H1 (cell line): ENCODE measurements at regions of chr3 and their contacts with region 1.

Region 1: DNA sequence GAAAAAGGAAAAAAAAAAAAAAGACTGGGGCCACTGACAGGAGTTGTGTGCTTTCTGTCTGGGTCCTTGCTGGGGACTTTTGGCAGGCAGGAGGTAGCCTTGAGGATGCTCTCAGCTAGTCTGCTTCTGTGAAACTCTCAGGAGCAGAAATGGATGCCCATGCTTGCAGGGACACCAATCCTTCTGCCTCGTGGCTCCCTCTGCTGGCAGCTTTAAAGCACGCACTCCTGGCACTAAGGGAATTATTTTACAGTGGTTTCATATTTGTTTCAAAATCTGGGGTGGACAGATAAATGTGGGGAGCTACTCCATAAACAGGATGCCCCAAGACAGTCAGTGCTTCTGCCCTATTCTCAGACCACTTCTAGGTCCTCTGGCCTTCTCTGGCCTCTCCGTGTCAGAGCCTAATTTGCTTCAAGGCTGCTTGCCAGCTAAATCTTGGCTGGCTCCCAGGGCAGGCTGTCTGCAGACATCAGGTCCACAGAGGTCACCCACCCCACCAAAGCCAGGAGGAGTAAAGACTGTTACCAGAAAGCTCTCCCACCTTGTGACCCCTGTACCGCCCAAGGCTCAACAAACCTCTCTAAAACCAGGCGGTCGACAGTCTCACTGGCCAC is 17.1 kb downstream of the TRAIP start:
- DNase-seq: peak; percentile 15 to 78
- H3K4me3 ChIP-seq: no peak overlapping the region
- H3K27ac ChIP-seq: 0 out of 2 replicates have a peak overlapping the region, but pooled peaks have one; percentile 3
- H3K4me1 ChIP-seq: peaks cover 0 to 6% (median 0%) of the 10 kb centered on the region in 4 experiments; a peak in 2 of 7 replicates
- H3K27me3 ChIP-seq: no peaks in the 10 kb centered on the region
- CTCF ChIP-seq: peak; percentile 82 to 91 (median 86)
- EP300 ChIP-seq: no peak
- POLR2A ChIP-seq: no peak
- RAD21 ChIP-seq: peak; percentile 85 to 86

Region 2: GRCh38 chr3:49786241-49786958 is 52.9 kb before region 1 on chr3 and contains the start of gene IP6K1:
- CTCF ChIA-PET with region 1: interaction called, 20 read pairs
- POLR2A ChIA-PET with region 1: interaction called, 3 read pairs
- DNase-seq: peak; percentile 99
- H3K4me3 ChIP-seq: peak within 1 kb of the TSS; percentile 75 to 95 (median 86)
- H3K27ac ChIP-seq: peak within 1 kb of the TSS; percentile 74
- H3K4me1 ChIP-seq: peaks cover 0 to 5% (median 2%) of the 10 kb centered on the region in 4 experiments; a peak in 2 of 7 replicates
- H3K27me3 ChIP-seq: peaks cover 0 to 2% (median 0%) of the 10 kb centered on the region in 4 experiments; a peak in 2 of 7 replicates
- CTCF ChIP-seq: no peak
- EP300 ChIP-seq: no peak
- POLR2A ChIP-seq: peak in 1 of 2 experiments; percentile 67; a peak in 2 of 3 replicates
- RAD21 ChIP-seq: no peak
- total RNA-seq, gene IP6K1: 35.2 and 36.3 TPM in 2 replicates

Region 3: GRCh38 chr3:49813497-49814174 is 25.7 kb before region 1 on chr3 and contains the start of gene UBA7:
- CTCF ChIA-PET with region 1: interaction called, 266 read pairs
- POLR2A ChIA-PET with region 1: interaction called, 8 read pairs
- DNase-seq: no peak
- H3K4me3 ChIP-seq: no peak within 1 kb of the TSS
- H3K27ac ChIP-seq: no peak within 1 kb of the TSS
- H3K4me1 ChIP-seq: no peaks in the 10 kb centered on the region
- H3K27me3 ChIP-seq: peaks cover 0 to 3% (median 0%) of the 10 kb centered on the region in 4 experiments; a peak in 1 of 7 replicates
- CTCF ChIP-seq: no peak
- EP300 ChIP-seq: no peak
- POLR2A ChIP-seq: no peak
- RAD21 ChIP-seq: no peak
- total RNA-seq, gene UBA7: 0.34 and 1.9 TPM in 2 replicates

Region 4: GRCh38 chr3:49867871-49868321 is 28.6 kb after region 1 on chr3:
- CTCF ChIA-PET with region 1: interaction called, 83 read pairs
- POLR2A ChIA-PET with region 1: interaction called, 4 read pairs
- DNase-seq: peak in 1 of 2 experiments; percentile 86
- H3K4me3 ChIP-seq: peak overlapping the region in 1 of 4 experiments; percentile 66; a peak in 3 of 8 replicates
- H3K27ac ChIP-seq: no peak overlapping the region
- H3K4me1 ChIP-seq: peaks cover 11 to 47% (median 32%) of the 10 kb centered on the region in 4 experiments
- H3K27me3 ChIP-seq: peaks cover 0 to 5% (median 3%) of the 10 kb centered on the region in 4 experiments; a peak in 2 of 7 replicates
- CTCF ChIP-seq: no peak
- EP300 ChIP-seq: no peak
- POLR2A ChIP-seq: no peak
- RAD21 ChIP-seq: peak in 1 of 2 experiments; percentile 11; a peak in 1 of 4 replicates

Region 5: GRCh38 chr3:49889296-49889926 is 50.1 kb after region 1 on chr3:
- CTCF ChIA-PET with region 1: interaction called, 20 read pairs
- POLR2A ChIA-PET with region 1: no interaction called
- DNase-seq: no peak
- H3K4me3 ChIP-seq: no peak overlapping the region
- H3K27ac ChIP-seq: no peak overlapping the region
- H3K4me1 ChIP-seq: peaks cover 0 to 2% (median 0%) of the 10 kb centered on the region in 4 experiments; a peak in 1 of 7 replicates
- H3K27me3 ChIP-seq: no peaks in the 10 kb centered on the region
- CTCF ChIP-seq: no peak
- EP300 ChIP-seq: no peak
- POLR2A ChIP-seq: no peak
- RAD21 ChIP-seq: no peak

Region 6: GRCh38 chr3:49929331-49930240 is 90.3 kb after region 1 on chr3 and contains the start of gene MON1A:
- CTCF ChIA-PET with region 1: interaction called, 28 read pairs
- POLR2A ChIA-PET with region 1: no interaction called
- DNase-seq: peak in 1 of 2 experiments; percentile 100
- H3K4me3 ChIP-seq: peak within 1 kb of the TSS; percentile 61 to 87 (median 80)
- H3K27ac ChIP-seq: peak within 1 kb of the TSS; percentile 39; the same call in 1 of the 2 replicates
- H3K4me1 ChIP-seq: peaks cover 2 to 9% (median 5%) of the 10 kb centered on the region in 4 experiments; a peak in 5 of 7 replicates
- H3K27me3 ChIP-seq: no peaks in the 10 kb centered on the region
- CTCF ChIP-seq: peak; percentile 20 to 48 (median 41); a peak in 3 of 4 replicates
- EP300 ChIP-seq: no peak
- POLR2A ChIP-seq: peak in 1 of 2 experiments; percentile 57; a peak in 2 of 3 replicates
- RAD21 ChIP-seq: no peak; a peak in 1 of 4 replicates
- total RNA-seq, gene MON1A: 9.8 and 10.3 TPM in 2 replicates